Activated naive CD4-positive, alpha-beta T cell treated with anti-CD3 and anti-CD28 coated beads for 36 hours (primary cell): ENCODE measurements at regions of chrX and their contacts with region 1.

Region 1: DNA sequence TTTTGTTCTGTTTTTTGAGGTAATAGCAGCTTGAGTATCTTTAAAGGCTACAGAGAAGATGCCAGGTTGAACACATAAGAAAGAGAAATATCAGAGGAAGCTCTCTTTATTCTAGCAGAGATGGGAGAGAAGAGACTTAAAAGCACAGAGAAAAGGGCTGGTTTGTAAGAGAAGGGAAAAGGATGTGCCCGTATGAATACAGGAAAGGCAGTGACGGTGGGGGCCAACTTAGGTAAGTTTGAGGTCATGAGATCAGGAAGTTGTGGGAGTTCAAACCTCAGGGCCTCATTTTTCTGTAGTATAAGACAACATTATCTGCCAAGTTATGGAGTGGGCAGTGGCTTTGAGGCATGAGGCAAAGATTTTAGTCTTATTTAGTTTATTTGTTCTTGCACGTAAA is 121.3 kb upstream of the S100G start:
- DNase-seq: peak; percentile 64
- H3K4me3 Mint-ChIP-seq: peak overlapping the region; percentile 10
- H3K27ac Mint-ChIP-seq: peak overlapping the region; percentile 94
- H3K4me1 Mint-ChIP-seq: peaks cover 38% of the 10 kb centered on the region
- H3K27me3 Mint-ChIP-seq: no peaks in the 10 kb centered on the region

Region 2: DNA sequence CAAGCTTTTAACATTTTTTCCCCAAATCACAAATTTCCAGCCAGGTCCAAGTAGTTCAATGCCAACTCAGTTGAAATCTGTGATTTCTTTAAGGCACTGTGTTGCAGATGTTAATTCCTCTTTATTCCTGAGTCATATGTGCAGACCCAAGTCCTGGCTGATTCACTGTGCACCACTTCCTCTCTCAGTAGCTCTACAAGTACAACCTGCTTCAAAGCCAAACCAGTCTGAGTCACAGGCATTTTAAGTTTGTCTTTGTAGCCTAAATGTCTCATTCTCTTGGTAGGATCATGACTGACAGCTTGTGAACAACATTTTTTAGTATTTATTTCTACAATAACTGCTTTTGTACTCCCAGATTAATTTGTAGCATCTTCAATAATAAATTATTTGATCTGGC is 44.3 kb before region 1 on chrX:
- CTCF ChIA-PET with region 1: interaction called, 3 read pairs
- intact Hi-C with region 1: loop called (anchors 1 kb)
- DNase-seq: peak; percentile 66
- H3K4me3 Mint-ChIP-seq: no peak overlapping the region
- H3K27ac Mint-ChIP-seq: no peak overlapping the region
- H3K4me1 Mint-ChIP-seq: peaks cover 34% of the 10 kb centered on the region
- H3K27me3 Mint-ChIP-seq: no peaks in the 10 kb centered on the region

Region 3: DNA sequence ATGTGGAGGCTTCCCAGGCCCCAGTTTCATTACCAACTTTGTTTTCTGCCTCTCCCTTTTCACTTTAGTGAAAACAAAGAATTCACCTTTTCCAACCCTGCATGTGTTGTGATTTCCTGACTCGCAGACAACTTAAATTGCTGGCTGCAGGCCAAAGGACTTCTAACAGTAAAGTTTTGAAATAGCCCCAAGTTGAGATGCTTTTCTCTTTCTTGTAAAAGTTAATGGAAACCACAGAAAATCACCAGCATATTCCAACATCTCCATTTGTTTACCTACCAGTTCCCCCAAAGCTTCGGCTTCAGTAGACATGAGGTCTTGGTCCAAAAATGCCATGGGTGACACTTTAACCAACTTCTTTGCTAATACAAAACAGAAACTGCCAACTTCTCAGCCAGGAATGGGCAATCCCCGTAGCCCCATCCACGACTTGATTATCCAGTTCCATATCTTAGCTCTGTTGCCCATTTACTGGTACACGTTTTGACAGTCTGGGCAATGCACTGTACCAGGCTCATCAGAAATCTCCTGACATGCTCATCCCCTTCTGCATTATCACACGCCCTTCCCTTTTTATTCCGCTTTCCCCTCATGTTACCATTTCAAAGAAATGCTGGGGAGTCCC is 16.7 kb before region 1 on chrX:
- CTCF ChIA-PET with region 1: no interaction called
- intact Hi-C with region 1: no loop called
- DNase-seq: no peak
- H3K4me3 Mint-ChIP-seq: no peak overlapping the region
- H3K27ac Mint-ChIP-seq: no peak overlapping the region
- H3K4me1 Mint-ChIP-seq: peaks cover 8% of the 10 kb centered on the region
- H3K27me3 Mint-ChIP-seq: no peaks in the 10 kb centered on the region

Region 4: DNA sequence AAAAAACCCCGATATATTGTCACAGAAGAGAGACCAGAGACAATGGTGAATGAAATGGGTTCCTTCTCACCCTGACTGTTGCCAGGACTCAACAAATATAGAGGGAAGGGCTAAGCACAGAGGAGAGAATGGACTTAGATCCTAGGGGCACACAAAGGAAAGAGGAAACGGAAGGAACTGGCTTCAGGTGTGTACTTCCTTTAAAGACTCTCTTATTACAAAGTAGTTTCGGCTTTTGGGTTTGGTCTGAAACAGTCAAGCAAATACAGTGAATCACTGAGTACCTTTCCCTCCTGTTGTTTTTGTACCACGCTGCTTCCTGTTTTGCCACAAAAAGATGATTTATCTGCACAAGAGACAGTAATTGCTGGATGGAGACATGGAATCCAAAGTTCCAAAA is 75.2 kb after region 1 on chrX:
- CTCF ChIA-PET with region 1: interaction called, 5 read pairs
- intact Hi-C with region 1: loop called (anchors 2 kb)
- DNase-seq: peak; percentile 31
- H3K4me3 Mint-ChIP-seq: peak overlapping the region; percentile 28
- H3K27ac Mint-ChIP-seq: peak overlapping the region; percentile 82
- H3K4me1 Mint-ChIP-seq: peaks cover 33% of the 10 kb centered on the region
- H3K27me3 Mint-ChIP-seq: no peaks in the 10 kb centered on the region

Region 5: GRCh38 chrX:16712112-16712833 is 183.7 kb after region 1 on chrX and contains the start of gene CTPS2:
- CTCF ChIA-PET with region 1: no interaction called
- intact Hi-C with region 1: loop called (anchors 5 kb)
- DNase-seq: peak; percentile 63
- H3K4me3 Mint-ChIP-seq: peak within 1 kb of the TSS; percentile 83
- H3K27ac Mint-ChIP-seq: peak within 1 kb of the TSS; percentile 74
- H3K4me1 Mint-ChIP-seq: peaks cover 9% of the 10 kb centered on the region
- H3K27me3 Mint-ChIP-seq: no peaks in the 10 kb centered on the region
- total RNA-seq, gene CTPS2: 5.6 to 6.8 TPM

Region 6: GRCh38 chrX:17655211-17656034 is 1126.8 kb after region 1 on chrX:
- CTCF ChIA-PET with region 1: no interaction called
- intact Hi-C with region 1: loop called (anchors 10 kb)
- DNase-seq: peak; percentile 26
- H3K4me3 Mint-ChIP-seq: peak overlapping the region; percentile 88
- H3K27ac Mint-ChIP-seq: peak overlapping the region; percentile 91
- H3K4me1 Mint-ChIP-seq: peaks cover 21% of the 10 kb centered on the region
- H3K27me3 Mint-ChIP-seq: no peaks in the 10 kb centered on the region